Left ventricle myocardium inferior (tissue), 1 donor: ENCODE measurements at regions of chr19 and their contacts with region 1.

Region 1: GRCh38 chr19:48899781-48900476 is at the start of gene NUCB1:
- DNase-seq: peak; percentile 99
- H3K4me3 ChIP-seq: peak within 1 kb of the TSS; percentile 92
- H3K27ac ChIP-seq: peak within 1 kb of the TSS; percentile 95
- H3K4me1 ChIP-seq: peaks cover 54% of the 10 kb centered on the region
- H3K27me3 ChIP-seq: no peaks in the 10 kb centered on the region
- CTCF ChIP-seq: peak; percentile 55
- total RNA-seq, gene NUCB1: 221 TPM

Region 2: GRCh38 chr19:48954595-48955310 is 54.8 kb after region 1 on chr19 and contains the start of gene BAX:
- intact Hi-C with region 1: loop called (anchors 10 kb)
- DNase-seq: peak; percentile 97
- H3K4me3 ChIP-seq: peak within 1 kb of the TSS; percentile 98
- H3K27ac ChIP-seq: peak within 1 kb of the TSS; percentile 92
- H3K4me1 ChIP-seq: peaks cover 24% of the 10 kb centered on the region
- H3K27me3 ChIP-seq: no peaks in the 10 kb centered on the region
- CTCF ChIP-seq: no peak
- total RNA-seq, gene BAX: 25.5 TPM

Region 3: GRCh38 chr19:49009828-49010227 is 109.9 kb after region 1 on chr19:
- intact Hi-C with region 1: no loop called
- DNase-seq: no peak
- H3K4me3 ChIP-seq: no peak overlapping the region
- H3K27ac ChIP-seq: no peak overlapping the region
- H3K4me1 ChIP-seq: no peaks in the 10 kb centered on the region
- H3K27me3 ChIP-seq: no peaks in the 10 kb centered on the region
- CTCF ChIP-seq: no peak

Region 4: GRCh38 chr19:49182848-49183344 is 283.0 kb after region 1 on chr19:
- intact Hi-C with region 1: no loop called
- DNase-seq: no peak
- H3K4me3 ChIP-seq: no peak overlapping the region
- H3K27ac ChIP-seq: no peak overlapping the region
- H3K4me1 ChIP-seq: no peaks in the 10 kb centered on the region
- H3K27me3 ChIP-seq: no peaks in the 10 kb centered on the region
- CTCF ChIP-seq: no peak